ENCODE measurements at regions of chr9 and their contacts with region 1.

Region 1: DNA sequence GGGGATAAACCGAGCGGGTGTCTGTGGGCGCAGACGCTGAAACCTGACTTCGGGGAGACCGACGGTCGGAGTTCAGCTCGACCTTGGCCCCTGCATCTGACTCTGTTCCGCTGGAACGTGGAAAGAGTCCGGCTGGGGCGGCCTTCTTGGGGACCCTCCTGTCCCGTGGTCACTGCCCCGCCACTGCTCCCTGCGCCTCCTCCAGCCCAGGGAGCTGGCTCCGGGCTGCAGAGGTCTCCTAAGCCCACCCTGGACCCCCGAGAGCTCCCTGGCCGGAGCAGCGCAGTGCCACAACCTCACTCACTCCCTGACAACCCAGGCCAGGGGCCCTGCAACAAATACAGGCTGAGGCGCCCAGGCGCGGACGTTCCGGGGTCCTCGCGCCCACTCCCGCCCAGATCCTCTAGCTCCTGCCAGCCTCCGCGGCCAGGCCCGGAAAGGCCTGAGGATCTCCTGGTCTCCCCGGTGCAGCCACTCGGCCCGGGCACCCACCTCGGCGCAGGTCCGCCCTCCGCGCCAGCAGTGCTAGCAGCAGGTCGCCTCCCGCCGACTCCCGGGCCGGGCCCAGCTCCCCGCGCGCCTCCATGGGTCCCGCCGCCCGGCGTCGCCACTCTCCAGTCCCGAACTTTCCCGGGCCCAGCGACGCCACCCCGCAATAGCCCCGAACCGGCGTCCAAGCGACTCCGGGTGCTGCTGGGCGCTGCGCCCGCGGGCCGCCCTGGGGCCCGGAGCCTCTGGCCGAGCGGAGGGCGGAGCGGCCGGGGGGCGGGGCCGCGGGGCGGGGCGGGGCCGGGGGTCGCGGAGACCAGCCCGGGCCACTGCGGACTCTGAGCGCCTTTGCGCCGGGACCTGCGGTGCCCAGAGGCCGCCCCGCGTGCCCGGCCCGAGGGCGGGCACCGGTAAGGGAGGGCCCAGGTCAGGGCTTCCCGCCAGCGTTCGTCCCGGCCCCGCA is 2.2 kb downstream of the LHX3 start:
- DNase-seq: no peak
- H3K4me3 ChIP-seq: no peak overlapping the region
- H3K27ac ChIP-seq: no peak overlapping the region
- H3K4me1 ChIP-seq: no peaks in the 10 kb centered on the region
- H3K27me3 ChIP-seq: no peaks in the 10 kb centered on the region
- CTCF ChIP-seq: no peak

Region 2: DNA sequence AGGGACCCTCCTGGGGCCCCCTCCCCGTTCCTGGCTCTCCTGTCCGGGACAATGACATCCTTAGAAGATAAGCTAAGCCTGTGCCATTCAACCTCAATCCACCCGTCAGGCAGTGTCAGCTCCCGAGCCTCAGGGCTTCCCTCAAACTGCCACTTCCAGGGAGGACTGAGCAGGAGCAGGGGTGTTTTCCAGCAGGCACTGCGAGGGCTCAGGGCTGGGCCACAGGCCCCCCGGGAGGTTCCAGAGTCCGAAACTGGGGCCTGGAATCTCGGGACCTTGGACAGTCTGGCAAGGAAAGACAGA is 24.0 kb before region 1 on chr9:
- CTCF ChIA-PET with region 1: interaction called, 10 read pairs
- POLR2A ChIA-PET with region 1: no interaction called
- intact Hi-C with region 1: no loop called
- DNase-seq: no peak
- H3K4me3 ChIP-seq: no peak overlapping the region
- H3K27ac ChIP-seq: no peak overlapping the region
- H3K4me1 ChIP-seq: no peaks in the 10 kb centered on the region
- H3K27me3 ChIP-seq: peaks cover 38% of the 10 kb centered on the region
- CTCF ChIP-seq: no peak